Activated B cell treated with CpG ODN at 0.5 μM for 24 hours (primary cell): ENCODE measurements at regions of chr1 and their contacts with region 1.

Region 1: GRCh38 chr1:100010804-100011203 is 41.0 kb downstream of the SLC35A3 start:
- DNase-seq: no peak
- ATAC-seq: no peak
- H3K4me3 Mint-ChIP-seq: no peak overlapping the region
- H3K27ac Mint-ChIP-seq: no peak overlapping the region
- H3K4me1 Mint-ChIP-seq: no peaks in the 10 kb centered on the region
- H3K27me3 Mint-ChIP-seq: no peaks in the 10 kb centered on the region
- CTCF ChIP-seq: no peak

Region 2: GRCh38 chr1:98854137-98854536 is 1156.7 kb before region 1 on chr1:
- CTCF ChIA-PET with region 1: no interaction called
- POLR2A ChIA-PET with region 1: no interaction called
- intact Hi-C with region 1: no loop called
- DNase-seq: no peak
- ATAC-seq: no peak
- H3K4me3 Mint-ChIP-seq: no peak overlapping the region
- H3K27ac Mint-ChIP-seq: no peak overlapping the region
- H3K4me1 Mint-ChIP-seq: no peaks in the 10 kb centered on the region
- H3K27me3 Mint-ChIP-seq: no peaks in the 10 kb centered on the region
- CTCF ChIP-seq: no peak

Region 3: GRCh38 chr1:99956755-99957154 is 54.0 kb before region 1 on chr1:
- CTCF ChIA-PET with region 1: no interaction called
- POLR2A ChIA-PET with region 1: no interaction called
- intact Hi-C with region 1: no loop called
- DNase-seq: no peak
- ATAC-seq: no peak
- H3K4me3 Mint-ChIP-seq: no peak overlapping the region
- H3K27ac Mint-ChIP-seq: no peak overlapping the region
- H3K4me1 Mint-ChIP-seq: no peaks in the 10 kb centered on the region
- H3K27me3 Mint-ChIP-seq: no peaks in the 10 kb centered on the region
- CTCF ChIP-seq: no peak

Region 4: DNA sequence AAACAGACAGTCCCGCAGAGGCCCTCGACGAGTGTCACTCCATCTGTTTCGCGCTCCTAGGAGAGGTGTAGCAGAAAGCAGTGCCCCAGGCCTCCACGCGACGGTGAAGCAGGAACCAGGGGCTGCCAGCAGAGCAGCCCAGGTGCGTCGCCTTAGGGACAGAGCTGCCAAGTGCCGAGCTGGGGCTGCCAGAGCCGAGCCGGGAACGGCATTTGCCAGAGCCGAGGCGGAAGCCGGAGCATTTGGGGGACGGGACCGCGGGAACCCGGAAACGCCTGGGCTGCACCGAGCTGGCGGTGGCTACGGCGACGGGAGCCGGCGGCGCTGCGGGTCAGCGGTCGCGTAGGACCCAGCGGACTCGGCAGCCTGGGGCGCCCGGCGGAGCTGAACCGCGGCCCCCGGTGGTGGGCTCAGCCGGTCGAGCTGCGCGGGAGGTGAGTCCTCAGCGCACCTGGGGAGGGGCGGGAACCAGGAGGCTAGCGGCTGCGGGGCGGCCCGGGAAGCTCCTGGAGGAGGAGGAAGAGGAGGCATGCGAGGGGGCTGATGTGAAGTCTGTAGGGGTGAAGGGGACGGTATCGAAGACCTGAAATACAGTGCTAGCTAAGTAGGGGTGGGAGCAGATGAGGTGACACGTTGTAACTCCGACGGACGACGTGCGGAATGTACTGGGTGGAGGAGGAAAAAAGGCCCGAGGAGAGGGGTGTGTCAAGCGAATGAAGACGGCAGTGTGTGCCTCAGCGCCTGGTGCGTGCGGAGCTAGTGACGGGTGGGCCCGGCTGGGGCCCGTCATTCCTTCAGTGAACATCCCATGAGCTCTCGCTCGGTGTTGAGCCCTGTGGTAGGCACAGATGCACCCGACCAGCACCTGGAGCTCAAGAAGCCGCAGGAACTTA is 40.8 kb before region 1 on chr1 and contains the start of gene SLC35A3:
- CTCF ChIA-PET with region 1: no interaction called
- POLR2A ChIA-PET with region 1: no interaction called
- intact Hi-C with region 1: loop called (anchors 1 kb)
- DNase-seq: peak; percentile 73
- ATAC-seq: peak; percentile 83
- H3K4me3 Mint-ChIP-seq: peak within 1 kb of the TSS; percentile 100
- H3K27ac Mint-ChIP-seq: peak within 1 kb of the TSS; percentile 95
- H3K4me1 Mint-ChIP-seq: peaks cover 27% of the 10 kb centered on the region
- H3K27me3 Mint-ChIP-seq: no peaks in the 10 kb centered on the region
- CTCF ChIP-seq: no peak
- total RNA-seq, gene SLC35A3: 18.3 and 21.1 TPM in 2 replicates